Body of pancreas (tissue), 4 donors: ENCODE measurements at regions of chr1 and their contacts with region 1.

Region 1: DNA sequence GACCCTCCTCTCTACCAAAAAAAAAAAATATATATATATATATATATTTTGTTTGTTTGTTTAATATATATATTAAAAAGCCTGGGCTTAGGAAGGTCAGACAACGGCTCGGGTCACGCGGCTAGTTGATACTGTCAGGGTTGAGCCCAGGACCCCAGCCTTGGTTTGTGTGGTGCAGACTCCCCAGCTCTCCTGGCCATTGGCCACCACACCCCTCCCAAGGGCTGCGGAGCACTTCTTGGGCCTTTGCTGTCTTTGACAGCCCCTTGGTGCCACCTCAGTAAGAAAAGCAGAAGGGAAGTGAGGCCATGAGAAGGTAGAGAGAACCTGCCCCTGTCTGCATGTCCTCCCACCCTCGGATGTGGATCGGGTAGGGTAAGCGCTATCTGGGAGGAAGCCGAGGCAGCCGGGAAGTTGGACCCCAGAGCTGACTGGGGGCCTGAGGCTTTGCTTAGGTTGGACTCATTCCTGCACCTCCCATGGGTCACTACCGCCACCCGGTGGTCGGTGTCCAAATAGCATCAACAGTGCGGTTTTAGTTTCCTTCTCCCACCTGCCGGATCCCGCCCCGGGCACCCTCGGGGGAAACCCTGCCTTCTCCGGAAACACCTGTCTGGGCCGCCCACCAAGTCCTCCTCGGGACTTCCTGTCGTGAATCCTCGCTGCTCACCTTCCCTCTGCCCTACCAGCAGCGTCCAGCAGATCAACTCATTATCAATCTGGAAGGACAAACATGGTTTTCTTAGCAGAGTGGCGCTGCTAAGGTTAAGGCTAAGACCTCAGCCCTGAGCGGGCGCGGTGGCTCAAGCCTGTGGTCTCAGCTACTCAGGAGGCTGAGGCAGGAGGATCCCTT is 29.8 kb upstream of the GNPAT start:
- DNase-seq: peak; percentile 84 to 89 (median 88)
- ATAC-seq: peak; percentile 94
- H3K4me3 ChIP-seq: no peak overlapping the region
- H3K27ac ChIP-seq: peak overlapping the region in 3 of 4 donors; percentile 14 to 53 (median 37)
- H3K4me1 ChIP-seq: peaks cover 11% of the 10 kb centered on the region
- H3K27me3 ChIP-seq: no peaks in the 10 kb centered on the region
- CTCF ChIP-seq: peak; percentile 70 to 97 (median 95)
- POLR2A ChIP-seq: no peak

Region 2: DNA sequence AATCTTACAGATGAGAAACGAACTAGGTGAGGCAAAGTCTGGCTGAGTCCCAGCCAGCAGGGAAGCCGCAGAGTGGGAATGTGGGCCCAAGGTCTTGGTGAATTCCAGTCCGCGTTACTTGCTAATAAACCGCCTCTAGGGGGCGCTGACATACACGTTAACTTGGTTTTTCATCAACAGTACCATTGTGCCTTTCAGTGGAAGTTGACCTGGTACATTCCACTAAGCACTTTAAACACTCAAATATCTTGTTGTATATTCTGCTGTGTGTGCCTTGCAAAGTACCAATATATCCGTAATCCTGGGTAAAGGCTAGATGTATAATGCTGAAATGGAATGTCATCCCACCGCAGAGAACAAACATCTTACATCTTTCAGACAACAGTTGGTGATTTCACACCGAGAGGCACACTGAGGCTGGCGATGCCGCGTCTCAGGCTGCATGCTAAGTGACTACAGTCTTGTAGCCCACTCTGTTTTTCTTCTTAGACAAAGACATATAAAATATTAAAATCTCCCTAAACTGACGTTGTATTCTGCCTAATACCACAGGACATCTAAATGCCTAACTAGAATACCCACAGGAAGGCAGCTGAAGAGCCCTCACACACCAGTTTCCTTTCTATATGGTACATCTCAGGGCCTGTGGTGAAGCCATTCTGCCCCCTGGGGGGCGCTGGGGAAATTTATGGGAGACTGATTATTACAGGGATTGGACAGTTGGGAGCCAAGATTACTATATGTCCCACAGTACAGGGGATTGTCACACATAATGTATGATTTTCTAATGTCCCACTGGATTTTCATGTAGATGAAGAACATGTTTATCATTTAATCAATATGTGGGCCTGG is 293.7 kb before region 1 on chr1:
- intact Hi-C with region 1: loop called (anchors 10 kb)
- DNase-seq: peak; percentile 88 to 93 (median 91)
- ATAC-seq: peak; percentile 86
- H3K4me3 ChIP-seq: no peak overlapping the region
- H3K27ac ChIP-seq: no peak overlapping the region
- H3K4me1 ChIP-seq: no peaks in the 10 kb centered on the region
- H3K27me3 ChIP-seq: no peaks in the 10 kb centered on the region
- CTCF ChIP-seq: peak; percentile 45 to 82 (median 76)
- POLR2A ChIP-seq: no peak

Region 3: DNA sequence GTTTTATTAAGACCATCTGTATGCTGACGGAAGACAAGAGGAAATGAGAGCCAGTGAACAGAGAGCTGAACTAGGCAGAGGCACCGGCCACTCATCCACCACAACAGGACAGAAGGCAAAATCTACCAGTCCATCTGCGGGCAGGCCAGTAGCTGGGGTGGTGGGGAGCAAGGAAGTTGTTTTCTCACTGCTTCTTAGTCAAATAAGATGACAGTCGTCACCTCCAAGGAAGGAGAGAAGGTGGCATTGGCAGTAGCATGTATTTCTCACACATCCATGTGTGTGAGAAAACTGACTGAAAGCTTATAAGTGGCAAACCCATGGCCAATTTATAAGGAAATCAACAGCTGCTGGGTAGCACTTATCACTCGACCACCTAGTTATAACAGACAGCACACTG is 240.8 kb before region 1 on chr1:
- intact Hi-C with region 1: no loop called
- DNase-seq: no peak
- ATAC-seq: no peak
- H3K4me3 ChIP-seq: no peak overlapping the region
- H3K27ac ChIP-seq: no peak overlapping the region
- H3K4me1 ChIP-seq: peaks cover 21% of the 10 kb centered on the region
- H3K27me3 ChIP-seq: no peaks in the 10 kb centered on the region
- CTCF ChIP-seq: no peak
- POLR2A ChIP-seq: no peak

Region 4: GRCh38 chr1:231252341-231252740 is 41.1 kb after region 1 on chr1:
- intact Hi-C with region 1: no loop called
- DNase-seq: no peak
- ATAC-seq: no peak
- H3K4me3 ChIP-seq: no peak overlapping the region
- H3K27ac ChIP-seq: no peak overlapping the region
- H3K4me1 ChIP-seq: no peaks in the 10 kb centered on the region
- H3K27me3 ChIP-seq: no peaks in the 10 kb centered on the region
- CTCF ChIP-seq: no peak
- POLR2A ChIP-seq: no peak

Region 5: DNA sequence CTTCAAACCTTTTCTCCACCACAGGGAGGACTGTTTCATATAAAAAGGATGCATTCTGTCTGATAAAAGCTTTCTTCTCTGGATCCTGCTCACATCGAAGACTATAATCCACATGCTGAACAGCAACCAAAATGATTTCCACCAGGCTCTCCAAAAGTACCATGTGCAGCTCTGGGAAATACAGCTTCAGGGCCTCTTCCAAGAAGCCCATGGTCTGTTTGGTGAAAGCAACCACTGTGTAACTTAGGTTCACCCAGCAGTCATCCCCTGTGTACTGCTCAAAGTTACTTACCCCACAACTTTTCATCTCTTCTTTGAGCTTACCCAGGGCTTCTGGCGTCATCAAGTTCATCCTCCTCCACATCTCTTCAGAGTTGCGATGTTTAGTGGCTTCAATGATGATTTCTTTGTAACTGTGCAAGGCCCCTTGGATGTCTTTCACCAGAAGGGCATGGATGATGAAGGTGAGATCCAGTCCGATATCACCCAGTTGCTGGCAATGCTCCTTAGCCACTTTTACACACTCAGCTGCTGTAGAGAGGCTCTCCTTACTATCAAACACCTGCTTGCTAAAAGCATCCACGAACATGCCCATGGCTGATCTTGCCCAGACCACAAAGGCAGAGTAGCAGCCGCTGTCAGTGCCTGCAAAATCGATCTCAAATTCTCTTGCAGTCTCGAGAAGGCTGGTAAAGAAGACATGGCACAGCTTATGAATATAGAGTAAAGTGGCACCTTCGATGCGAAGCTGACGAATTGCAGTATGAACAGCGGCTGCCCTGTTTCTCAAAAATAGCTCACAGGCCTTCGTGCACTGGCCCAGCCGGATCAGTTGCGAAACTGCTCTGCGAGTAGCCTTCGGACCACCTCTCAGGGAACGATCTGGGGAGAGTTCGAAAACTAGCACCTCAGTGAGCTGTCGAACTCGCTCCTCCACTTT is 124.7 kb after region 1 on chr1:
- intact Hi-C with region 1: no loop called
- DNase-seq: no peak
- ATAC-seq: no peak
- H3K4me3 ChIP-seq: peak overlapping the region in 1 of 2 donors; percentile 92
- H3K27ac ChIP-seq: no peak overlapping the region
- H3K4me1 ChIP-seq: peaks cover 49% of the 10 kb centered on the region
- H3K27me3 ChIP-seq: no peaks in the 10 kb centered on the region
- CTCF ChIP-seq: no peak
- POLR2A ChIP-seq: no peak